Activated B cell treated with CpG ODN at 0.5 μM for 24 hours (primary cell): ENCODE measurements at regions of chr4 and their contacts with region 1.

Region 1: DNA sequence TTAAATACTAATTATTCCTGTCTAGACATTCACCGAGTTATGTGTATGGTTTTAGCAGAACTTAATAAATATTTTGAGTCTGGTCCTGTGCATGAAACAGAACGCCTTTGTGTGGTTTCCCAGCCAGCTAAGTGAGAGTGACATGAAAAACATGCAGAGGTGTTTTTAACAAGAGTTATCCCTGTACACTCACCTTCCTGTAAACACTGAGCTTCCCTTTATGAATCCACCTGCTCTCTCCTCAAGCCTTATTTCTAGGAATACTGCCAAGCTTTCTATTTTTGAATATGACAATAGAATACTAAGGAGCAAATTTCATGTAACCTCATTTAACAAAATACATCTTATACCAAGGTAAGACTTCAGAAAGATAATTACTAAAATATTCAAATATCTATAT is 270.3 kb upstream of the CTSO start:
- DNase-seq: no peak
- ATAC-seq: no peak
- H3K4me3 Mint-ChIP-seq: no peak overlapping the region
- H3K27ac Mint-ChIP-seq: no peak overlapping the region
- H3K4me1 Mint-ChIP-seq: no peaks in the 10 kb centered on the region
- H3K27me3 Mint-ChIP-seq: no peaks in the 10 kb centered on the region
- CTCF ChIP-seq: no peak

Region 2: DNA sequence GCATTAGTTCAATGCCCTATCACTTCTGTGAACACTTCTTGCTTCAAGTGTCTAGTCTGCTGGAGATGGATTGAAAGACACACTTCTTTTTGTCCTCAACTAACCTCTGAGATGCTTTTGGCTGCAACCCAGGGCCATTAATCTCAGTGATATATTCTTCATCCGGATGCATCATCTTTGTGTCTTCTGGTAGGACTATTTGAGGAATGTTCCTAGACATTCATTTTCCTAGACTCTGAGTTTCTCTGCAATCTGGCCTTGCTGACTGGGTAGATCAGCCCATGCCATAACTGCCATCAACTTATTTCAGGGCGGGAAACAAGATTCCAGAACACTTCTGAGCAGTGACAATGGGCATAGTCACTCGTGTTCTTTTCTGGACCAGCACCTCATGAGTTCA is 418.2 kb after region 1 on chr4:
- CTCF ChIA-PET with region 1: no interaction called
- POLR2A ChIA-PET with region 1: no interaction called
- intact Hi-C with region 1: no loop called
- DNase-seq: no peak
- ATAC-seq: no peak
- H3K4me3 Mint-ChIP-seq: no peak overlapping the region
- H3K27ac Mint-ChIP-seq: no peak overlapping the region
- H3K4me1 Mint-ChIP-seq: no peaks in the 10 kb centered on the region
- H3K27me3 Mint-ChIP-seq: no peaks in the 10 kb centered on the region
- CTCF ChIP-seq: no peak

Region 3: DNA sequence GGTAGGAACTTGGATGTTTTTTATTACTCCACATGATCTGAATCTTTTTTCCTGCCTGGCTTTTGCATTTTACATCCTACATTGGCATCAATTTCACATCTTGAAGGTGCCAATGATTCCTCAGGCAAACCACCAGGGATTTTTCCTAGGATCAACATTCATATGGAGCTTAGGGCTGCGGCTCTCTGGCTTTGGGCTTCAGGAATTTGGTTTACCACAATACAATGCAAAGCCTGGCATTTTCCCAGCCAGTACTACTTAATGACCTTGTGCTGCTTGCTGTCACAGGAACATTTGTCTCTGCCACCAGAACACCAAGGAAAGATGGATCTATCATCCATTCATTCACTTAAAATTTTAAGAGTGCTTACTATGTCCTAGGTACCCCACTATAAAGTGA is 566.9 kb after region 1 on chr4:
- CTCF ChIA-PET with region 1: no interaction called
- POLR2A ChIA-PET with region 1: interaction called, 11 read pairs
- intact Hi-C with region 1: no loop called
- DNase-seq: no peak
- ATAC-seq: no peak
- H3K4me3 Mint-ChIP-seq: no peak overlapping the region
- H3K27ac Mint-ChIP-seq: no peak overlapping the region
- H3K4me1 Mint-ChIP-seq: no peaks in the 10 kb centered on the region
- H3K27me3 Mint-ChIP-seq: no peaks in the 10 kb centered on the region
- CTCF ChIP-seq: no peak